H1 (cell line): ENCODE measurements at regions of chr2 and their contacts with region 1.

Region 1: DNA sequence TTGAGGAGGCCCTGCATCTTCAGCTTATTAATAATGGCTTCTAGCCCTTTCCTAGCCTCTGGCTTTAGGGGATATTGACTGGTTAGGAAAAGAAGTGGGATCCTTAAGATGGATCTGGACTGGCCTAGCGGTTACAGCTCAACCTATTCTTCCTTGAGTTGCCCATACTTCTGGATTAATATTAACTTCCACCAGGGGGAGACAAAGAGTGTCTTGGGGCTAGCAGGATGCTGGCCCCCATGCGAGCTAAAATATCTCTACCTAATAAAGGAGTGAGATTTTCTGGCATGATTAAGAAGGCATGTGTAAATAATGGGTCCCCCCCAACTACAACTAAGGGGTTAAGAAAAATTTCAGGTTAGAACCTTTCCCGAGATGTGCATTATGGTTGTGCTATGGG is 23.2 kb upstream of the PLA2R1 start:
- DNase-seq: no peak
- H3K4me3 ChIP-seq: no peak overlapping the region
- H3K27ac ChIP-seq: no peak overlapping the region
- H3K4me1 ChIP-seq: no peaks in the 10 kb centered on the region
- H3K27me3 ChIP-seq: no peaks in the 10 kb centered on the region; a peak in 1 of 7 replicates
- CTCF ChIP-seq: peak in 1 of 3 experiments; percentile 1; a peak in 1 of 4 replicates
- EP300 ChIP-seq: no peak
- POLR2A ChIP-seq: no peak
- RAD21 ChIP-seq: no peak

Region 2: GRCh38 chr2:160062292-160063005 is 23.2 kb before region 1 on chr2 and contains the start of gene PLA2R1:
- CTCF ChIA-PET with region 1: no interaction called
- POLR2A ChIA-PET with region 1: no interaction called
- DNase-seq: peak in 1 of 2 experiments; percentile 83
- H3K4me3 ChIP-seq: peak within 1 kb of the TSS; percentile 33 to 78 (median 62)
- H3K27ac ChIP-seq: no peak within 1 kb of the TSS
- H3K4me1 ChIP-seq: peaks cover 4 to 8% (median 5%) of the 10 kb centered on the region in 4 experiments; a peak in 6 of 7 replicates
- H3K27me3 ChIP-seq: peaks cover 0 to 18% (median 17%) of the 10 kb centered on the region in 4 experiments; a peak in 6 of 7 replicates
- CTCF ChIP-seq: no peak
- EP300 ChIP-seq: no peak
- POLR2A ChIP-seq: peak in 1 of 2 experiments; percentile 41; a peak in 1 of 3 replicates
- RAD21 ChIP-seq: no peak; a peak in 1 of 4 replicates
- total RNA-seq, gene PLA2R1: 1.5 and 2.2 TPM in 2 replicates

Region 3: GRCh38 chr2:160075171-160075570 is 10.5 kb before region 1 on chr2:
- CTCF ChIA-PET with region 1: interaction called, 15 read pairs
- POLR2A ChIA-PET with region 1: interaction called, 4 read pairs
- DNase-seq: no peak
- H3K4me3 ChIP-seq: no peak overlapping the region
- H3K27ac ChIP-seq: no peak overlapping the region
- H3K4me1 ChIP-seq: no peaks in the 10 kb centered on the region
- H3K27me3 ChIP-seq: no peaks in the 10 kb centered on the region
- CTCF ChIP-seq: no peak
- EP300 ChIP-seq: no peak
- POLR2A ChIP-seq: no peak
- RAD21 ChIP-seq: no peak